ENCODE measurements at regions of chr22 and their contacts with region 1.

Region 1: GRCh38 chr22:19629720-19630419 is 84.4 kb upstream of the SEPTIN5 start:
- DNase-seq: peak; percentile 73 to 81
- ATAC-seq: peak; percentile 84 to 96 (median 90)
- H3K4me3 ChIP-seq: no peak overlapping the region
- H3K27ac ChIP-seq: no peak overlapping the region
- H3K4me1 ChIP-seq: no peaks in the 10 kb centered on the region
- H3K27me3 ChIP-seq: peaks cover 0 to 9% (median 3%) of the 10 kb centered on the region in 3 donors
- CTCF ChIP-seq: peak; percentile 92

Region 2: DNA sequence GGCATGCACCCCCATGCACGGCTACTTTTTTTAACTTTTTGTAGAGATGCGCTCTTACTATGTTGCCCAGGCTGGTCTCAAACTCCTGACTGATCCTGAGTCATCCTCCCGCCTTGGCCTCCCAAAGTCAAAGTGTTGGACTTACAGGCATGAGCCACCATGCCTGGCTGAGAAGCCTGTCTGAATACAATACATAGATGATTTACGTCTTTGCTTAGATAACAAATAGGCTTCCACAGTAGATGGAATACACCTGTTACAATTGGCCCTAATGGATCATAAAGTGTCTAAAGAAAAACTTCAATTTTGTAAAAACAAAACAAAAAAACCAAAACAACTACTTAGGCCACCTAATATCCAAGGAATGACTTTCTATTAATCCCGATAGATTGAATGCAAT is 325.3 kb before region 1 on chr22:
- intact Hi-C with region 1: loop called (anchors 5 kb)
- DNase-seq: no peak
- ATAC-seq: no peak
- H3K4me3 ChIP-seq: no peak overlapping the region
- H3K27ac ChIP-seq: no peak overlapping the region
- H3K4me1 ChIP-seq: no peaks in the 10 kb centered on the region
- H3K27me3 ChIP-seq: no peaks in the 10 kb centered on the region
- CTCF ChIP-seq: no peak

Region 3: DNA sequence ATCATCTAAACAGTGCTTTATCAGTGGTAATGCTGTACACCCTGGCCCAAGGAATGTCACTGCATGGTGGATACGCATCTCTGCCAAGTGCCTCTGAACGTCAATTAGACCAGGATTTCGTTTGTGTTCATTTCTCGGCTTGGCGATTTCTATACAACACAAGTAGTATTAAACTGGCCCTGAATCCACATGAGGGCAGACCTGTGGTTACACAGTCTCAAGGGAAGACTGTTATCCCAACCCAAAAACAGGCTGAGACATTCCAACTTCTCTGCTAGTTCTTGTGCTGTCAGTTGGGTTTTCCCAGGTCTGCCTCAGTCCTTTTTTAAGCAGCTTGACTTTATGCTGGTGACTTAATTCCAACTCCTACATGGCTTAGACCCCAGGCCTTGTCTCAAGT is 256.4 kb before region 1 on chr22:
- intact Hi-C with region 1: no loop called
- DNase-seq: no peak
- ATAC-seq: no peak
- H3K4me3 ChIP-seq: no peak overlapping the region
- H3K27ac ChIP-seq: no peak overlapping the region
- H3K4me1 ChIP-seq: no peaks in the 10 kb centered on the region
- H3K27me3 ChIP-seq: no peaks in the 10 kb centered on the region
- CTCF ChIP-seq: no peak

Region 4: GRCh38 chr22:19495562-19496323 is 134.1 kb before region 1 on chr22:
- intact Hi-C with region 1: loop called (anchors 2 to 5 kb)
- DNase-seq: no peak
- ATAC-seq: no peak
- H3K4me3 ChIP-seq: no peak overlapping the region
- H3K27ac ChIP-seq: no peak overlapping the region
- H3K4me1 ChIP-seq: no peaks in the 10 kb centered on the region
- H3K27me3 ChIP-seq: no peaks in the 10 kb centered on the region
- CTCF ChIP-seq: peak; percentile 33

Region 5: DNA sequence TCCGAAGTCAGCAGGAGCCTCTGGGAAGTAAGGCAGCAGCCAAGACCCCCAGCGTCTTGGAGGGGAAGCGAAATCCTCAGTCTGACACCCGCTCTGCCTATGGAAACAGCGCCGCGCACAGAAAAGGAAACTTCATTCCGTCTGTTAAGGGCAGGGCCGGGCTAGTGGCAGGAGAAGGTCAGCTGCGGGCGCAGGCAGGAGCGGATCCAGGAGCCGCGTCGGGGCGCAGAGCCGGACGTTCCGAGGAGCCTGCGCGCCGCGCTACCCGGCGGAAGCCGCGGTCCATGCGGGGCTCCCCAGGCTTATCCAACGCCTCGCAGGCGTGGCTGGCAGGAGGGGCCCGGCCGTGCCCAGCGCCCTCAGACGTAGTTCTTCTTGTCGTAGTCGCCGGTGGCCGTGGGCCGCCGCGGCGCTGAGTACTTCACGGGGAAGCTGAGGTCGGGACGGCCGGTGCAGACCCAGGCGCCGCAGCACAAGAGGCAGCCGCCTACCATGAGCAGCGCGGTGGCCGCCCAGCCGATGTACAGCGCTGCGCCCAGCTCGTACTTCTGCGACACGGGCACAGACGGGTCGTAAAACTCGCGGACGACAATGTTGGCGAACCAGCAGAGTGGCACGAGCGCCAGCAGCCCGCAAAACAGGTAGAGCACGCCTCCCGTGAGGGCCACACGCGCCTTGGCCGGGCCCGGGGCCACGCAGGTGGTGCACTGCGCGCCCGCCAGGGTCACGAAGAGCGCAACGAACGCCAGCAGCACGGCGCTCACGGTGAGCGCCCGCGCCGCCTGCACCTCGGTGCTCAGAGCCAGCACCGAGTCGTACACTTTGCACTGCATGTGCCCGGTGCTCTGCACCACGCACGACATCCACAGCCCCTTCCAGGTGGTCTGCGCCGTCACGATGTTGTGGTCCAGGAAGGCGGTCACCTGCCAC is 106.4 kb before region 1 on chr22:
- intact Hi-C with region 1: loop called in 1 of 2 experiments (anchors 10 kb)
- DNase-seq: no peak
- ATAC-seq: peak in 3 of 4 donors; percentile 33 to 47 (median 44)
- H3K4me3 ChIP-seq: peak overlapping the region; percentile 64
- H3K27ac ChIP-seq: peak overlapping the region; percentile 53
- H3K4me1 ChIP-seq: peaks cover 9% of the 10 kb centered on the region
- H3K27me3 ChIP-seq: peaks cover 0 to 45% (median 13%) of the 10 kb centered on the region in 3 donors
- CTCF ChIP-seq: no peak